Gastrocnemius medialis (tissue), 4 donors: ENCODE measurements at regions of chr17 and their contacts with region 1.

Region 1: DNA sequence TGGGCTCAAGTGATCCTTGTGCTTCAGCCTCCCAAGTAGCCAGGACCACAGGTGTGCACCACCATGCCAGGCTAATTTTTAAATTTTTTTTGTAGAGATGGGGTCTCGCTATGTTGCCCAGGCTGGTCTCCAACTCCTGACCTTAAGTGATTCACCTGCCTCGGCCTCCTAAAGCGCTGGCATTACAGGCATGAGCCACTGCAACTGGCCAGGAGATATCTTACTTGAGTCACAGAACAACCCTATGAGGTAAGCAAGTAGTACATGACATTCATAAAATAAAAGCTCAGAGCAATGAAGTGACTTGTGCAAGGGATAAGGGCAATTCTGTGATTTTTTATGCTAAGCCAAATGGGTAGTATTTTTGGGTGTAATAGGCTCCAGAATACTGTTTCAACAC is 57.3 kb downstream of the CDC27 start:
- DNase-seq: no peak
- ATAC-seq: no peak
- H3K4me3 ChIP-seq: no peak overlapping the region
- H3K27ac ChIP-seq: no peak overlapping the region
- H3K4me1 ChIP-seq: no peaks in the 10 kb centered on the region
- H3K27me3 ChIP-seq: no peaks in the 10 kb centered on the region
- CTCF ChIP-seq: no peak
- POLR2A ChIP-seq: no peak

Region 2: DNA sequence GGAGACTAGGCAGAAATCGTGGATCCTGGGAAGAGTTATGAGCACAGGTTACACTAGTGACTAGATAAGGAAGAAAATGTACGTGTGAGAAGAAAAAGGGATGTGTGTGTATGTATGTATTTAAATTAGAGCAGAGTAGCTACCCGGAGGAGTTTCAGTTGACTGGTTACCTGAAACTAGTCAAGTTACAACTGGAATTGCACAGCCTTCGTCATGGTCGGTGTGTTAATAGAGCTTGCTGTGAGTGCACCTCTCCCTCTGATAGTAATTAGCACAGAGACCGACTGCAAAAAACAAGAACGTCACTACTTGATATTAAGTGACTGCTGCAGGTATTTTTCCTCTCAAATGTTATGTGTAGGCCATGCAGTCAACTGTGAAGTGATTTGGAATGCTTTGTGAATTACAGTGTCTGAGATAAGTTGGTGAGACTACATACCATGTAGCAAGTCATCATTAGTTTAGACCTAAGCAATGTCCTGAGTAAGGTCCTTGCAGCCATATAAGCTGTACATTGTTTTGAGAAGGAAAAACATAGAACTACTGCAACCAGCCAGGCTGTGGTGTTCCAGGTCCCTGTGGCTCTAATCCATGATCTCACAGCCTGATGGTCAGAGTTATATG is 409.0 kb before region 1 on chr17:
- in situ Hi-C with region 1: loop called in 1 of 4 experiments (anchors 25 kb)
- intact Hi-C with region 1: no loop called
- DNase-seq: no peak
- ATAC-seq: no peak
- H3K4me3 ChIP-seq: no peak overlapping the region
- H3K27ac ChIP-seq: no peak overlapping the region
- H3K4me1 ChIP-seq: no peaks in the 10 kb centered on the region
- H3K27me3 ChIP-seq: no peaks in the 10 kb centered on the region
- CTCF ChIP-seq: no peak
- POLR2A ChIP-seq: no peak

Region 3: DNA sequence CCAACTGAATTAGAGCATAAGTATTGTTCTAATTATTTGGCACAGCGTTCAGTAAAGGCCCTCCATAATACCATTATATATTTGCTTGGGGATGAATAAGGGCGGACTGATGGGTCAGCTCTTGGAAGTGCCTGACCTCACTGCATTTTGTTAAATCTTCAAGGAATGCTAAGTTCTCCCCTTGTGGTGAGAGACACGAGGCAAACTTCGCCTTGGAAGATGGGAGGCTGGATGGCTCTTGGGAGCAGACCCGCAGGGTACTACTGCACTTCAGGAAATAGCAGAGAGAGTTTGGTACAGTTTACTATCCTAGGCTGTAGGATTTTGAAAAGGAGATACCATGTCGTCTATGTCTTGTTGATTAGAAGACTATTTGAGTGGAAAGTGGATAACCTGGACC is 65.7 kb before region 1 on chr17:
- in situ Hi-C with region 1: no loop called
- intact Hi-C with region 1: no loop called
- DNase-seq: no peak
- ATAC-seq: no peak
- H3K4me3 ChIP-seq: no peak overlapping the region
- H3K27ac ChIP-seq: peak overlapping the region in 1 of 4 donors; percentile 88
- H3K4me1 ChIP-seq: peaks cover 5 to 7% of the 10 kb centered on the region in 2 donors
- H3K27me3 ChIP-seq: no peaks in the 10 kb centered on the region
- CTCF ChIP-seq: no peak
- POLR2A ChIP-seq: no peak

Region 4: DNA sequence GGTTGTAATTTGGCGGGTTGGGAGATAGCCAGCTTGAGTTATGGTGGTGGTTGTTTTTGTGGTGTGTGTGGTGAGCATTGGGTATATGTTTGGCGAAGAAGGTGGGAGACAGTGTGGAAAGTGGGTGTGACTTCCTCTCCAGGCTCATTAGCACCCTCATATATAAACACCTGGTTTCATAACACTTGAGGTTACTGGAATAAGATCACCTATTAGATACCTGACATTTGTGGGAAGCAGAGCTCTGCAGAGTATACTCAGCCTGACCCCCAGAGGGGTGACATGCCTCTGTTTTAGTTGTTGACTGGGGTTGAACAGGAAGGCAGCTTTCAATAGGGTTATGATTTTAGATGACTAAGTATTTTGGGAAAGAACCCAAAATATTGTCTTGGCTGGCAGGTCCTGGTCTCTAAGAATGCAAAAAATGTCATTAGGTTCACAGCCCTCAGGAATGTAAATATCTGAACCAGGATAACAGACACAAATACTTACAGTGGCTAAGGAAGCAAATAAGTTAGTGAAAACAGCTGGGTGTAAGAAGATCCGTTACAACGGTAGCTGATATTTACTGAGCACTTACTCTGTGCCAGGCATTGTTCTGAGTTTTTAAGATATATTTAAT is 173.7 kb after region 1 on chr17:
- in situ Hi-C with region 1: no loop called
- intact Hi-C with region 1: no loop called
- DNase-seq: no peak
- ATAC-seq: peak; percentile 42 to 65
- H3K4me3 ChIP-seq: no peak overlapping the region
- H3K27ac ChIP-seq: peak overlapping the region in 3 of 4 donors; percentile 26 to 56 (median 55)
- H3K4me1 ChIP-seq: no peaks in the 10 kb centered on the region
- H3K27me3 ChIP-seq: no peaks in the 10 kb centered on the region
- CTCF ChIP-seq: no peak
- POLR2A ChIP-seq: no peak